ENCODE measurements at regions of chr11 and their contacts with region 1.

Region 1: DNA sequence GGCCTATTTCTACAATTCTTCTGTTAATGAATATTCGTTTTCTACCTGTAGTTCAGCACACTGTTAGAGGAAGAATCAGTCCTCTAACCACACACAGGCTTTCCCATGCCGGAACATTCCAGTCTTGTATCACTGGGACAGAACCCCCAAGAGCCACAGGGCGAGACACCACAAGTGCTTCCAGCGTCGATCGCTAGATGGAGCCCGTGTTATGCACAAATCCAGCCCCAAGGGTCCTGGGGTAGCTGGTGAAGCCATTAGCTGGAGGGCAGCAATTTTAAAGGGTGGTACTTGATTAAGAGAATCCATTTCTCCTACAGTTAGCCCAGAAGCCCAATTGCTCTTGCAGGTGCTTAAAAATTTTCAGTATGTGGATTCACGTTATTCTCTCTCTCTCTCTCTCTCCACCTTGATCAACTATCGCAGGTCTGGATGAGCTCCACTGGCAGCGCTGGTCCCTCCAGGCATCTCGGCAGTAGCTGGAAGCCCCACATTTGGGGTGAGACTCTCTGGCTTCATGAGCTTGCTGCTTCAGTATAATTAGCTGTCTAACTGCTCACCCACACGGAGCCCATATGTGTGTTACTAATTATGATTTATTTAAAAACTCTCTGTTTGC is 148.2 kb upstream of the SNX19 start:
- DNase-seq: peak; percentile 69
- CTCF ChIP-seq: peak; percentile 83

Region 2: DNA sequence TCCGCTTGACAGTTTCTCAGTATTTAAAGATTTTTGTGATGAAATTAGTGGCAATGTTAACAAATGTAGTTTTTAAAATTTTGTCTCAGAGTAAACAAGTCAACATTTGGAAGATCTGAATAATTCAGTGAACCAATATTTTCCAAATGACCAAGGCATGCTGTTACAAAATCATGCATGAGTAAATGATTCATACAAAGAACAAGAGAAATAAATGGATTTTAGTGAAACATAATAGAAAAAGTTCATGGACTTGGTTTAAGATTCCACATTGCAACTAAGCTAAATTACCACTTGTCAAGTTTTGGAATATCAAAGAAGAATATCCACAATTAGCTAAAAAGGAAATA is 22.5 kb before region 1 on chr11:
- CTCF ChIA-PET with region 1: interaction called, 16 read pairs
- POLR2A ChIA-PET with region 1: no interaction called
- DNase-seq: no peak
- CTCF ChIP-seq: no peak

Region 3: DNA sequence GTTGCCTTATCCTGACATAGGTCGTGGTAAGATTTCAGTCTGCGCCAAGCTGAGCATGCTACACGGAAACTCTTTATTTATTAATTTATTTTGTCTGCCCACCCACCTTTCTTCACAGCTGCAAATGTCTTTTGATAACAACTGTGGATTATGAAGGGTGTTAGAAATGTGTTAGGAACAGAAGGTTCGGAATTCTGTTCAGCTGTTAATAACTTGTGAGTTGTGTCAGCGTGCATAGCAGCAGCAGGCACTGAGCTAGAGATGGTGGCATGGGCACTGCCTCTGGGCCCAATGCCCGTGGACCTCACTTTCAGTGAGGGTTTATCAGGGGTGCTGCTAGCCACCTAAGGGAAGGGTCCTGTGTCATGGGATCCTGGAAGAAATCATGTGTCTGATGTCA is 143.4 kb after region 1 on chr11:
- CTCF ChIA-PET with region 1: interaction called, 12 read pairs
- POLR2A ChIA-PET with region 1: no interaction called
- DNase-seq: no peak
- CTCF ChIP-seq: no peak

Region 4: DNA sequence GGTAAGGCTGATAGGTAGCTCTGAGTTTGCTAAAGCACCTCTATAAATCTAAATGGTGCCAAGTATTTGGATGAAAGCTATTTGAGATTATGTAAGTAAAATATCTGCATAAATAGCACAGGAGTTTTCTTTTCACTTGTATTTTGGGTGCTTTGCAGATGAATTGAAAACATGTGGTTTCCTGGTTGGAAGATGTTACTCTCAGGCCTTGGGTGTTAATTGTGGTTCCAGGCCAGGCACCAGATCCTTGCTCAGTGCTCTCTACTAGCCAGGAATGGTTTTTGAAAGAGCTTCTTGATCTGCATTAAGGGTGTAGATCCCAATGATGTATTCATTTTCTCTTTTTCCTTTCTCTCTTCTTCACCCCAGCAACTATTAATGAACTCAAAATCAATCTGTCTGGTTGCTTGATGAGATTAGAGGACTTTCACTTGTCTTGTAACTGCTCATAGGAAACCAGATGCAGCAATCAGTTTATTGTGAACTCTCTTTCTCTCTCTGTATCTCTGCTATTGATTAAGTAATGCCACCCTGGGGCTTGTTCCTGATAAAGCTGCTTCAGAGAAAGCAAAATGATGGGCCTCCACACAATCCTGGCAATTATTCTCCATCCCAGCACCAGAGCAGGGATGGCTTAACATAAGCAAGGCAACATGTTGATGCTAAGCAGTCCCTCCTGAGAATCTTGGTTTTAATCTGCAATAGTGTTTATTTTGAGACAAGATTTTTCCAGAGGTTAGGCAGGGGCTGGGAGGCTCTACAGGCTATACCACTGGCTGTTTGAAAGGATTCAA is 158.9 kb after region 1 on chr11:
- CTCF ChIA-PET with region 1: interaction called, 100 read pairs
- POLR2A ChIA-PET with region 1: no interaction called
- DNase-seq: no peak
- CTCF ChIP-seq: no peak

Region 5: DNA sequence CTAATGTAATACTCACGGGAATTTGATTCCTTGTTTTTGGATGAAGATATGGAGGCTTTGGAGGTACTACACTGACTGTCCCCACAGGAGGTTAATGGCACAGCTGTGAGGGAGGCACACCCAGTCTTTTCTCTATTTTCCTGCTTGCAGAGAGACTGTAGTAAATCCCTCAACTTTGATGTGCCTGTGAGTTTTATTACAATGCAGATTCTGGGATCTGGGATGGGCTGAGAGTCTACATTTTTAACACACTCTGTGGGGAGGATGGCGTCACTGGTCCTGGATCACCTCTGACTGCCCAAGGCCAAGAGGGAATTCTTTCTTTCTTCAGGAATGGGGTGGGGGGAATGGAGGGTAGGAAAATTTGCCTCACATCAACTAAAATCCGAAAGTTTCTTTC is 225.7 kb after region 1 on chr11:
- CTCF ChIA-PET with region 1: no interaction called
- POLR2A ChIA-PET with region 1: no interaction called
- DNase-seq: no peak
- CTCF ChIP-seq: no peak

Region 6: GRCh38 chr11:131674051-131674755 is 609.7 kb after region 1 on chr11:
- CTCF ChIA-PET with region 1: interaction called, 70 read pairs
- POLR2A ChIA-PET with region 1: no interaction called
- DNase-seq: peak; percentile 75
- CTCF ChIP-seq: peak; percentile 91

Measured in GM10248 (cell line).